Ovary (tissue), 10 donors: ENCODE measurements at regions of chr11 and their contacts with region 1.

Region 1: DNA sequence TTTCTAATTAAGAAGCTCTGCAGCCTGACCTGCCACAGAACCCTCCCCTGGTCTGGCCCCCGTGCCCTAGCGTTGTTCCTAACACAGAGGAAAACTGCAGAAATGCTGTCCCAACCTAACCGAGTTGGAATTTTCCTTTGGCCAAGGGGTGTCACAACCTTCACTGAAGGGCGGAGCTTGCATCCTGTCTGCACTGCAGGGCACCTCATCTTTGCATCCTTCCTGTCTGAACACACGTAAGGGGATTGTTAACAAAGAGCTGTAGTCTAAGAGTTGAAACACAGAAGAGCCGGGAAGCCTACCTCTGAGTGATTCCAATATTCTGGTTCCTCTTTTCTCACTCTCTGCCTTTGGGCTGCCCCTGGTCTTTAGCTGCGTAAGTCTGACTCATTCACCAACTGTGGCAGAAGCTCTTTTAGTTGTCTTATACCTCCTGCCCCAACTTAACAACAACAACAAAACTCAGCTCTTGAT is 1.6 kb downstream of the DIXDC1 start:
- DNase-seq: no peak
- H3K4me3 ChIP-seq: no peak overlapping the region
- H3K27ac ChIP-seq: peak overlapping the region in 1 of 2 donors; percentile 58
- H3K4me1 ChIP-seq: peaks cover 3% of the 10 kb centered on the region
- H3K27me3 ChIP-seq: no peaks in the 10 kb centered on the region
- CTCF ChIP-seq: no peak
- EP300 ChIP-seq: no peak
- POLR2A ChIP-seq: no peak

Region 2: GRCh38 chr11:111714522-111714921 is 224.2 kb before region 1 on chr11:
- intact Hi-C with region 1: no loop called
- DNase-seq: no peak
- H3K4me3 ChIP-seq: no peak overlapping the region
- H3K27ac ChIP-seq: no peak overlapping the region
- H3K4me1 ChIP-seq: peaks cover 5% of the 10 kb centered on the region
- H3K27me3 ChIP-seq: no peaks in the 10 kb centered on the region
- CTCF ChIP-seq: no peak
- EP300 ChIP-seq: no peak
- POLR2A ChIP-seq: no peak

Region 3: DNA sequence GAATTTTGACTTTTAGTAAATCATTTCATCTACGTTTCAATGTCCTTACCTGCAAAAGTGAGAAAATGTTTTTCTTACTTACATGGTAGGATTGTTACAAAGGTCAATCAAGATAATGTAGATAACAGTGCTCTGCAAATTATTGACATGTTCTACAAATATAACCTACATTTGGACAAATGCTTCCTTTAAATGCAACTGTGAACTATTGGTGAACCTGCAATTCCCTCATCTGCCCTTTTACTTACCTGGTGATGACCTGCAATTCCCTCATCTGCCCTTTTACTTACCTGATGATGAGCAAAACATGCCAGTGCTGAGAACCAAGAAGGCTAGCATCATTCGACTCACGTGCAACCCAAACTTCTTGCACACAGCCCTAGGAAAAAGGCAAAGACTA is 78.5 kb before region 1 on chr11:
- intact Hi-C with region 1: no loop called
- DNase-seq: no peak
- H3K4me3 ChIP-seq: no peak overlapping the region
- H3K27ac ChIP-seq: no peak overlapping the region
- H3K4me1 ChIP-seq: no peaks in the 10 kb centered on the region
- H3K27me3 ChIP-seq: no peaks in the 10 kb centered on the region
- CTCF ChIP-seq: no peak
- EP300 ChIP-seq: no peak
- POLR2A ChIP-seq: no peak

Region 4: DNA sequence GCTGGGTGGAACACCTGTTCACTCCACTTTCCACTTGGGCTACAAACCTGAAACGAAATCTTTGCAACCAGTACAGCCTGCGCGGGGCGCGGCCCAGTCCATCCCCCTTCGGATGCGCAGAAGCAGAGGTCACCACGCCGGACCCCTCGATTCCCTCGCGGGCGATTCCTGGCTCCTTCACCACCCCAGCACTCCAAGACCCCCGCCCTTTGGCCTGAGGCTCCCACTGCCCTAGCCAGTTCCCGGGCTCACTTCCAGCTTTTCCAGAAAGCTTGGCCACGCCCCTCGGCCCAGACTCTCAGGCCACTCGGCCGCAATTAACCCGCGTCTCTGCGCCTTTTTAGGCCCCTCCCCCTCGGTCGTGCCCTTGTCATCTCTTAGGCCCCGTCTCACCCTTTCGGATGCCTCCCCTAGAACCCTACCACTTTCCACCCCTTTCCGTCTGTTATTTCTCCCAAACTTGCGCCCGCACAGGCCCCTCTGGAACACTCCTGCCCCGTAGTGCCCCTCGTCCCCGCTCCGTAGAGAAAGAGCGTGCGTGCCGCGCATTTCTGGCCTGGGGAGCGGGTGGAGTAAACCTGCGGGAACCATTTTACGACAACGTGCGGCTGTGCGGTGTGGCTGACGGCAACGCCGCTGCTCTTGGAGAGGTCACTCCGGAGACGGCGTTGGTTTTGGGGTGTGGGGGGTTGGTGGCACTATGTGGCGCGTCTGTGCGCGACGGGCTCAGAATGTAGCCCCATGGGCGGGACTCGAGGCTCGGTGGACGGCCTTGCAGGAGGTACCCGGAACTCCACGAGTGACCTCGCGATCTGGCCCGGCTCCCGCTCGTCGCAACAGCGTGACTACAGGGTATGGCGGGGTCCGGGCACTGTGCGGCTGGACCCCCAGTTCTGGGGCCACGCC is 86.3 kb after region 1 on chr11 and contains the start of gene DLAT:
- intact Hi-C with region 1: loop called in 1 of 4 experiments (anchors 10 kb)
- DNase-seq: peak; percentile 80 to 89 (median 86)
- H3K4me3 ChIP-seq: peak within 1 kb of the TSS; percentile 70
- H3K27ac ChIP-seq: peak within 1 kb of the TSS; percentile 89
- H3K4me1 ChIP-seq: no peaks in the 10 kb centered on the region
- H3K27me3 ChIP-seq: no peaks in the 10 kb centered on the region
- CTCF ChIP-seq: no peak
- EP300 ChIP-seq: no peak
- POLR2A ChIP-seq: peak; percentile 49
- total RNA-seq, gene DLAT: 10.8 to 26.4 (median 19.9) TPM

Region 5: GRCh38 chr11:112392904-112393303 is 454.2 kb after region 1 on chr11:
- intact Hi-C with region 1: no loop called
- DNase-seq: no peak
- H3K4me3 ChIP-seq: no peak overlapping the region
- H3K27ac ChIP-seq: no peak overlapping the region
- H3K4me1 ChIP-seq: no peaks in the 10 kb centered on the region
- H3K27me3 ChIP-seq: no peaks in the 10 kb centered on the region
- CTCF ChIP-seq: no peak
- EP300 ChIP-seq: no peak
- POLR2A ChIP-seq: no peak